ENCODE measurements at regions of chr19 and their contacts with region 1.

Region 1: GRCh38 chr19:21482863-21483276 is 22.5 kb upstream of the ZNF429 start:
- DNase-seq: peak; percentile 16 to 83 (median 67)
- ATAC-seq: peak; percentile 81
- H3K4me3 ChIP-seq: peak overlapping the region in 1 of 2 experiments; percentile 40
- H3K4me3 Mint-ChIP-seq: no peak overlapping the region
- H3K27ac ChIP-seq: no peak overlapping the region
- H3K27ac Mint-ChIP-seq: no peak overlapping the region
- H3K4me1 ChIP-seq: no peaks in the 10 kb centered on the region
- H3K4me1 Mint-ChIP-seq: no peaks in the 10 kb centered on the region
- H3K27me3 ChIP-seq: no peaks in the 10 kb centered on the region
- H3K27me3 Mint-ChIP-seq: no peaks in the 10 kb centered on the region
- CTCF ChIP-seq: peak; percentile 78

Region 2: GRCh38 chr19:19997656-19998268 is 1485.1 kb before region 1 on chr19:
- CTCF ChIA-PET with region 1: no interaction called
- POLR2A ChIA-PET with region 1: no interaction called
- intact Hi-C with region 1: loop called (anchors 2 to 5 kb)
- DNase-seq: peak in 8 of 9 experiments; percentile 2 to 62 (median 37)
- ATAC-seq: peak; percentile 61
- H3K4me3 ChIP-seq: no peak overlapping the region
- H3K4me3 Mint-ChIP-seq: no peak overlapping the region
- H3K27ac ChIP-seq: no peak overlapping the region
- H3K27ac Mint-ChIP-seq: no peak overlapping the region
- H3K4me1 ChIP-seq: no peaks in the 10 kb centered on the region
- H3K4me1 Mint-ChIP-seq: no peaks in the 10 kb centered on the region
- H3K27me3 ChIP-seq: no peaks in the 10 kb centered on the region
- H3K27me3 Mint-ChIP-seq: no peaks in the 10 kb centered on the region
- CTCF ChIP-seq: peak; percentile 86

Region 3: GRCh38 chr19:20247016-20247683 is 1235.7 kb before region 1 on chr19:
- CTCF ChIA-PET with region 1: no interaction called
- POLR2A ChIA-PET with region 1: no interaction called
- intact Hi-C with region 1: loop called (anchors 2 kb)
- DNase-seq: peak in 7 of 9 experiments; percentile 5 to 54 (median 35)
- ATAC-seq: no peak
- H3K4me3 ChIP-seq: no peak overlapping the region
- H3K4me3 Mint-ChIP-seq: no peak overlapping the region
- H3K27ac ChIP-seq: no peak overlapping the region
- H3K27ac Mint-ChIP-seq: no peak overlapping the region
- H3K4me1 ChIP-seq: no peaks in the 10 kb centered on the region
- H3K4me1 Mint-ChIP-seq: no peaks in the 10 kb centered on the region
- H3K27me3 ChIP-seq: no peaks in the 10 kb centered on the region
- H3K27me3 Mint-ChIP-seq: no peaks in the 10 kb centered on the region
- CTCF ChIP-seq: peak; percentile 37

Region 4: DNA sequence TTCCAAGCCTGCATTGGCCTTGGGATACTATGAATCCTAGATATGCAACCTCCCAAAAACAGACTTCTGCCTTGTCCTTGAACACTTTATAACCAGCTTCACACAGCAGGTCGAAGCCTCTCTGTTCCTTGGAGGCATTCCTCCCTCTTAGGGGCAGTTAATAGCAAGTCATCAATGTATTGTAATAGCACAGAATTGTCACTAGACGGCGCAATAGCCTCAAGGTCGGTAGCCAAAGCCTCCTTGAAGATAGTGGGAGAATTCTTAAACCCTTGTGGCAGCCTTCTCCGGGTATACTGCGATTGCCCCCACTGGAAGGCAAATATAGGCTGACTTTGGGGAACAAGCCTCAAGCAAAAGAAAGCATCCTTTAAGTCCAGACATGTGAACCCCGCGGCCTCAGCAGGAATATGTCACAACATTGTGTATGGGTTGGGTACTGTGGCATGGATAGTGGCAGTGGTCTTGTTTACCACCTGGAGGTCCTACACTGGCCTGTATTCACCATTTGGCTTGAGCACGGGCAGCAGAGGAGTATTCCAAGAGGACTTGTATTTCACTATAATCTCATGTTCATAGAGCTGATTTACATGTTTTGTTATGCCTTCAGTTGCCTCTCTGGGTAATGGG is 279.9 kb before region 1 on chr19:
- CTCF ChIA-PET with region 1: interaction called, 20 read pairs
- POLR2A ChIA-PET with region 1: no interaction called
- intact Hi-C with region 1: loop called in 1 of 2 experiments (anchors 1 kb)
- DNase-seq: peak in 5 of 9 experiments; percentile 16 to 70 (median 22)
- ATAC-seq: peak; percentile 31
- H3K4me3 ChIP-seq: no peak overlapping the region
- H3K4me3 Mint-ChIP-seq: no peak overlapping the region
- H3K27ac ChIP-seq: no peak overlapping the region
- H3K27ac Mint-ChIP-seq: no peak overlapping the region
- H3K4me1 ChIP-seq: no peaks in the 10 kb centered on the region
- H3K4me1 Mint-ChIP-seq: no peaks in the 10 kb centered on the region
- H3K27me3 ChIP-seq: no peaks in the 10 kb centered on the region
- H3K27me3 Mint-ChIP-seq: peaks cover 12% of the 10 kb centered on the region
- CTCF ChIP-seq: peak; percentile 73

Region 5: GRCh38 chr19:21468791-21469190 is 14.1 kb before region 1 on chr19:
- CTCF ChIA-PET with region 1: interaction called, 11 read pairs
- POLR2A ChIA-PET with region 1: no interaction called
- intact Hi-C with region 1: no loop called
- DNase-seq: peak in 2 of 9 experiments; percentile 14 to 16
- ATAC-seq: no peak
- H3K4me3 ChIP-seq: no peak overlapping the region
- H3K4me3 Mint-ChIP-seq: no peak overlapping the region
- H3K27ac ChIP-seq: no peak overlapping the region
- H3K27ac Mint-ChIP-seq: no peak overlapping the region
- H3K4me1 ChIP-seq: no peaks in the 10 kb centered on the region
- H3K4me1 Mint-ChIP-seq: peaks cover 2% of the 10 kb centered on the region
- H3K27me3 ChIP-seq: no peaks in the 10 kb centered on the region
- H3K27me3 Mint-ChIP-seq: peaks cover 2% of the 10 kb centered on the region
- CTCF ChIP-seq: no peak

Region 6: GRCh38 chr19:21691661-21692060 is 208.8 kb after region 1 on chr19:
- CTCF ChIA-PET with region 1: interaction called, 12 read pairs
- POLR2A ChIA-PET with region 1: no interaction called
- intact Hi-C with region 1: no loop called
- DNase-seq: no peak
- ATAC-seq: no peak
- H3K4me3 ChIP-seq: no peak overlapping the region
- H3K4me3 Mint-ChIP-seq: no peak overlapping the region
- H3K27ac ChIP-seq: no peak overlapping the region
- H3K27ac Mint-ChIP-seq: no peak overlapping the region
- H3K4me1 ChIP-seq: no peaks in the 10 kb centered on the region
- H3K4me1 Mint-ChIP-seq: no peaks in the 10 kb centered on the region
- H3K27me3 ChIP-seq: no peaks in the 10 kb centered on the region
- H3K27me3 Mint-ChIP-seq: no peaks in the 10 kb centered on the region
- CTCF ChIP-seq: no peak

Region 7: GRCh38 chr19:21698215-21698614 is 215.3 kb after region 1 on chr19:
- CTCF ChIA-PET with region 1: interaction called, 12 read pairs
- POLR2A ChIA-PET with region 1: no interaction called
- intact Hi-C with region 1: loop called (anchors 1 to 2 kb)
- DNase-seq: peak in 2 of 9 experiments; percentile 34 to 61
- ATAC-seq: peak; percentile 57
- H3K4me3 ChIP-seq: no peak overlapping the region
- H3K4me3 Mint-ChIP-seq: no peak overlapping the region
- H3K27ac ChIP-seq: no peak overlapping the region
- H3K27ac Mint-ChIP-seq: no peak overlapping the region
- H3K4me1 ChIP-seq: no peaks in the 10 kb centered on the region
- H3K4me1 Mint-ChIP-seq: no peaks in the 10 kb centered on the region
- H3K27me3 ChIP-seq: no peaks in the 10 kb centered on the region
- H3K27me3 Mint-ChIP-seq: no peaks in the 10 kb centered on the region
- CTCF ChIP-seq: peak; percentile 78